ENCODE measurements at regions of chr3 and their contacts with region 1.

Region 1: GRCh38 chr3:184371570-184372018 is 6.4 kb downstream of the THPO start:
- DNase-seq: peak; percentile 59
- H3K4me3 ChIP-seq: no peak overlapping the region
- CTCF ChIP-seq: peak; percentile 99

Region 2: DNA sequence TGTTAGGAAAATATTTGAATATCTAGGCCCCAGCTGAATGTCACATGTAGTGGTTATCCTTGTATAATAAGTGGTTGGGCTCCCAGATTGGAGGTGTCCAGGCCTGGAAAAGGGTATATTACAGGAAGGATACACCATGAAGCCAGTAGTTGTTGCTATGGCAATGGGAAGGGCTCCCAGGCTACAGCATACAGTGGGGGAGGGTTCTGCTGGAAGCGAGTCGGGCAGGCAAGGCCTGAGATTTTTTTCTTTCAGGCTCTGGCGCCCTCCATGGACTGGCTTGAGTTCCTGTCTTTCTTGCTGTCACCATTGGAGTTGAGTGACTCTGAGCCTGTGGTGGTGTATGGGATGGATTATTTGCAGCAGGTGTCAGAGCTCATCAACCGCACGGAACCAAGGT is 86.9 kb before region 1 on chr3:
- CTCF ChIA-PET with region 1: no interaction called
- POLR2A ChIA-PET with region 1: no interaction called
- DNase-seq: peak; percentile 26
- H3K4me3 ChIP-seq: no peak overlapping the region
- CTCF ChIP-seq: peak; percentile 34

Region 3: DNA sequence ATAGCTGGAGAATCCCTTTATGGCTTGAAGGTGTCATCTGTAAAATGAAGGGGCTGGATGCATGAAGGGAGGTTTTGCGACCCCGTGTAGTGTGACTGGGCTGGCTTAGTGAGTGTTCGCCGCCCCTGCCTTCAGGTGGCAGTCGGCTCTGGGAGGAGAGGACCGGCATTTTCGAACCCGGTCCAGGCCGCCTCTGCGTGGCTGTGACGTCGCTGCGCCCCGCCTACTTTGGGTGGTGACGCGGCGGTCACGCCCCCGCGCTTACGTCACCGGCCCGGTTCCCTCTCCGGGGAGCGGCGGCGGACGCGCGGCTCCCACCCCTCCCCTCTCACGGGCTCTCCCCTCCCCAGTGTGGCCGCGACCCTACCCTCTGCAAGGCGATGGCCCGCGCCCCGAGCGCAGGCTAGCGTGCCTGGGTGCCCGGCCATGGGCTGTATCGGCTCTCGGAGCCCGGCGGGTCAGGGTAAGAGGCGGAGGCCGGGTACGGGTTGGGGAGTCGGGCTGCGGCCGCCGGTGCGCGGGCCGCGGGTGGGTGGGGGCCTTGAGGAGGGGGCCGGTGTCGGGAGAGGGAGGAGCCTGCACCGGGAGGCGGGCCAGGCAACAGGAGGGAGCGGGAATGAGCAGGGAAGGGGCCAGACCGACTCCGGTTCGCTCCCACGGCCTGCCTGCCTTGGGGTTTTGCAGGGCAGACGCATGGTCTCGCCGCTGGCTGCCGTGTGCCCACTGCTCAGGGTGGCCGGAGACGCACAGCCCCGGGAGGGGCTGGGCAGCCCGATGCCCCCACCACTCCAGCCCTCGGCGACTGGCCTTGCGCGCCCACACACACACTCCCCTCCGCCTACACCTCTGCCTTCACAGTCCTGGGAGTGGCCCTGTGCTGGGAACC is 35.7 kb before region 1 on chr3:
- CTCF ChIA-PET with region 1: no interaction called
- POLR2A ChIA-PET with region 1: no interaction called
- DNase-seq: no peak
- H3K4me3 ChIP-seq: peak overlapping the region; percentile 72
- CTCF ChIP-seq: no peak

Region 4: DNA sequence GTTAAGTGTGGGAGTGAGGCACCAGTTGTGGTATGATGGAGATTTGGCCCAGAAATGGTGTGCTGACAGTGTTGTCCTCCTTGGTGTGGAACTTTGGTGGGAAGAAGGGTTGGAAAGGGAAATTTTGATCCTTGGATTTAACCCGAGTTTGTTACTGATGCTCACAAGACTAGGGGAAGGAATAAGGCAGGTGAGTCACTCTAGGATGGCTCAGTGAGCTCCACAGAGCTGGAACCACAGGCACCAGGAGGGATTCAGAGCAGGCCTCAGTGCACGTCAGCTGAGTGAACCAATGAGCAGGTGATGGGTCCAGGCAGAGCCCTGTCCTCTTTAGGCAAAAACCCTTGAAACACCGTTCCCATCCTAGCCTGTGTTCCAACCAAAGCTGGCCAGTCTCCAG is 19.7 kb after region 1 on chr3:
- CTCF ChIA-PET with region 1: interaction called, 43 read pairs
- POLR2A ChIA-PET with region 1: no interaction called
- DNase-seq: no peak
- H3K4me3 ChIP-seq: no peak overlapping the region
- CTCF ChIP-seq: no peak

Region 5: DNA sequence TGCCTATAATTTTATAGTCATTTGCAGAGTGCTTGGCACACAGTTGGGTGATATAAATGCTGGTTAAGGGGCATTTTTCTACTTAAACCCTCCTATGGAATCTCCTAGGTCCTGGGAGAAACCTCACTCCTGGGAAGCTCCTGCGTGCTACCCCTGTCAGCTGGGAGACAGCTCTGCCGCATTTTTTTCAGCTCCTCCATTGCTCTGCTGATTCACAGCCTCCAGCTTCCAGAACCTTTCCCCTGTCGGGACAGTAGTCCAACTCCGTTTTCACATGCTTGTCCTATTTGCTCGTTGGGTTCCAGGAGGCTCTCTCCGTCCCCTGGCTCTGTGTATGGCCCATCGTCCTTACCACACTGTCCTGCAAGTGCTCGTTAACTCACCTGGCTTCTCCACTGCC is 67.5 kb after region 1 on chr3:
- CTCF ChIA-PET with region 1: interaction called, 11 read pairs
- POLR2A ChIA-PET with region 1: no interaction called
- DNase-seq: no peak
- H3K4me3 ChIP-seq: no peak overlapping the region
- CTCF ChIP-seq: no peak

Region 6: DNA sequence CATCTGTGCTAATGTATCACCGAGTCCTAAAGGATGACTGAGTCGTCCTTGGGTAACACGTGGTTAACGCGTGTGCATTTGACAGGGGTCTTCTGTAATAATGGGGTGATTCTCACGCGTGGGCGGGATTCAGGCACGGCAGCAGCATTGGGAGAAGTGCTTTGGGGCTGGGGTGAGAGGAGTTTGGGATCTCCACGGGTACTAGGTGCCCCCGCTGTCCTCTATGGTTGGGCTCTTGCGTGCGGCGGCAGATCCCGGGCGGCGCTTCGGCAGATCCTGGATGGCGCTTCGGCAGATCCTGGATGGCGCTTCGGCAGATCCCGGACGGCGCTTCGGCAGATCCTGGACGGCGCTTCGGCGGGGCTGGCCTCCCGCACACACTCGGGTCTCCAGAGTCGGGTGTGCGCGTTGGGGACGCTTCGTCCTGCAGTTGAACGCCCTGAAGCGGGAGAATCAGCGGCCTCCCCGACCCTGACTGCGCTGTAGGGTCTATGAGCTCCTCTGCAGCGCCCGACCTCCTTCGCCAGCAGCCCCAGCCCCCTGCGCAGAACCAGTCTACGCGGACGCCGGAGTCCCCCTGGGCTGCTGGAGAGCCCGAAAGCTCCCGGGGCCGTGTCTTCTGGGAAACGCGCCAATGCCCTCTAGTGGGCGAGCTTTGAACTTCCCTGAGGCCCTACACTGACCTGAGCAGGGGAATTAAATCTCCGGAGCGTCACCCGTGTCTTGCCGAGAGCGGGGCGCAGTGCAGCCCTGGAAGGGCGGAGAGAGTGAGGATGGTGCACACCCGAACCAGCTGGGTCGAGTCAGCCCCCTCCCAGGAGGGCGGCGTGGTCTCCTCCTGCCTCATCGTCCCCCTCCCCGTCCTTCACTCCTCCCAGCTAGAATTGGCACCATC is 141.9 kb after region 1 on chr3:
- CTCF ChIA-PET with region 1: interaction called, 359 read pairs
- POLR2A ChIA-PET with region 1: interaction called, 4 read pairs
- DNase-seq: no peak
- H3K4me3 ChIP-seq: peak overlapping the region; percentile 52
- CTCF ChIP-seq: peak; percentile 84

Region 7: GRCh38 chr3:184543843-184544512 is 172.4 kb after region 1 on chr3:
- CTCF ChIA-PET with region 1: interaction called, 469 read pairs
- POLR2A ChIA-PET with region 1: interaction called, 3 read pairs
- DNase-seq: no peak
- H3K4me3 ChIP-seq: no peak overlapping the region
- CTCF ChIP-seq: peak; percentile 71

Region 8: DNA sequence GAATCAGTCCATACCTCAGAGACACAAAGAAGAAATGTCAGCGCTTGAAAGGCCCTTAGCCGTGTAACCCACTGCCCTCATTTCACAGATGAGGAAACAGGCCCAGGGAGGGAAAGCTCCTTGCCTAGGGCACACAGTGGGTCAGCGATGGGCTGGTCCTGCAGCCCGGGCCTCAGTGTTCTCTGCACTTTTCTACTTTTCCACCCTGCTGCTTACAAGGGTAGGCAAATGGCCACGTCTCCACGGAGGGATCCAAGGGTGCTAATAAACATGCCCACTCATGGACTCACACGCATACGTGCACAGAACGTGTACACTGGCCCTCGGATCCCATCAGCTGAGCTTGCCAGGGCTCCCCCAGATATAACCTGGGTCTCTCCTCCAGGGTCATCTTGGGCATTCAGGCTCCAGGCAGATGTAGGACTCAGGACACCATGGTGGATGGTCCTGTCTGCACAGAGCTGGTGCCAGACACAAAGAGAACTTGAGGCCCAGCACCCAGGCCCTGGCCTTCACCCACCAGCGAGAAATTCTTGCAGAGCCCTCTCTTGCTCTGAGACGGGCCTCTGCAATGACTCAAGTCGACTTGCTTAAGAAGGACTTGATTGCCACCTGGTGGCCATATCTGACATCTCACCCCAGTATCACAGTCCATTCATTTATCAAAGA is 405.9 kb after region 1 on chr3:
- CTCF ChIA-PET with region 1: interaction called, 11 read pairs
- POLR2A ChIA-PET with region 1: no interaction called
- DNase-seq: peak; percentile 92
- H3K4me3 ChIP-seq: no peak overlapping the region
- CTCF ChIP-seq: peak; percentile 62

Measured in AG04449 (cell line).